ENCODE measurements at regions of chr5 and their contacts with region 1.

Region 1: DNA sequence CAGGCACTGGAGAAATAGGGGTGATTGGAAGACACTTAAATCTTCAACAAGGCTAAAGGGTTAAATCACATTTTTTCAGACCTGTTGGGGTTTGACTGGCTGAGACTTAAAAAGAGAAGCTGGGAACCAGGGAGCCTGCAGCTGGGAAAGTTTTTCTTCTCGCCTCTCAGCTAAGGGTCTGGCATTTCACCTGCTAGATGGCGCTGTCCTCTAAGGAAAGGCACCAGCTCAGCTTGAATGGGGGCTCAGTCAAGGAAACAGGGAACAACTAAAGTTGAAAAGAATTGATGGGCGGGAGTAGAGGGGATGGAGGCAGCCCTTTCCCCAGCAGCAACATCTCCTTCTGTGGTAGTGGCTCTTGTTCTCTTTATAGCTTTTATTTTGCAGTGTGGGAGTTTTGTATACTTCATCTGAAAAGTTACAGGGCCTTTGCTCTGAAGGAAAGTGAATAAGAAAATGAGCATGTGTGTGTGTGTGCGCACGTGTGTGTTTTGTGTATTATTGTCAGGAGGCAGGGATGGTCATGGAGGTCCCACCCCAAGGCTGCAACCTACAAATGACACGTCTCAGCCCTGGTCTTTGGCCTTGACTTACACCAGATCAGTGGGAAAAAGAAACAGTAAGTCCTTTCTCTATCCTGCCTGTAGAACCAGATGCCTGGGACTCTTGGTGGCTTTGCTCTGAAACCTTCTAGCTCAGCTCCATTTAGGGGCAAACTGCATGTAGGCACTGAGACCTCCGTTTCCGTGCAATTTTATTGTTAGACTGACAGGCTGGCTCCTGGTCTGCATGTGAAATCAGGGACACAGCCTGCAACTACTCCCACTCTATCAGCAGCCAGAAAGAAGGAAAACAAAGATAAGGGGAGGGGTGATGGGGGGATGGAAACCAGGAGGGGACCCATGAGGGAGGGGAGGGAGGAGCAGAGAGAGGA is 316.2 kb upstream of the CLINT1 start:
- H3K4me3 Mint-ChIP-seq: no peak overlapping the region
- H3K27ac Mint-ChIP-seq: no peak overlapping the region
- H3K4me1 Mint-ChIP-seq: peaks cover 8% of the 10 kb centered on the region
- H3K27me3 Mint-ChIP-seq: no peaks in the 10 kb centered on the region

Region 2: DNA sequence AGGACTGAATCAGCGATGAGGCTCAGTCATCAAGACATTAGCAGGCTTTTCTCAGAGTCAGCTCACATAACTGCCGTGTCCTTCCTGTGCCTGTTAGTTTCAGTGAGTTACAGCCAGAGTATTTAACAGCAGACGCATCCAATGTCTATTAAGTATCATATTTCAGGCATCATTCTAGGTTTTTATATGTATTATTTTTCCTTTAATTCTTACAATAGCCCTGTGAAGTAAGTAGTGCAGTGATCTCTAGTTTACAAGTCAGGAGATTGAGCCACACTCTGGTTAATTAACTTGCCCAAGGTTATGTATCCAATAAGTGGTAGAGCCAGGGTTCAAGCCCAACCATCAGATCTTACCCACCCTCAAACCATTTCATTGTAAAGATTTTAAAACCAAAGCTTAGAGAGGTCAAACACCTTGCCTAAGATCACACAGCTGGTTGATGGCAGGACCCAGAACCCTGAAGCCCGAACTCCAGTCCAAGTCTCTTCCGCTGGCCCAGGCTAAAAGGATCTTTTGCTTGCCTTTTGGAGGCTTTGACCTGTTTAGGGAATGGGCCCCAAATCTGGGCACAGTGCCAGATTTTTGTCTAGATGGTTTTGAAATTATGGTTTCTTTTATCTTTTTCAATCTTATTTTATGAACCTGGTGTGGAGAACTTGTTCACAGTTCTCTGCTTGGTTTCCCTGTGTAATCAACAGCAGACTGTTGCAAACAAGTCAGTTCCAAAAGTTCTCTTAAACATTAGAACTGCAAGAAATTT is 55.0 kb before region 1 on chr5:
- intact Hi-C with region 1: no loop called
- H3K4me3 Mint-ChIP-seq: no peak overlapping the region
- H3K27ac Mint-ChIP-seq: no peak overlapping the region
- H3K4me1 Mint-ChIP-seq: peaks cover 18% of the 10 kb centered on the region
- H3K27me3 Mint-ChIP-seq: no peaks in the 10 kb centered on the region

Region 3: GRCh38 chr5:158695595-158696330 is 520.6 kb after region 1 on chr5:
- intact Hi-C with region 1: loop called (anchors 1 kb)
- H3K4me3 Mint-ChIP-seq: no peak overlapping the region
- H3K27ac Mint-ChIP-seq: no peak overlapping the region
- H3K4me1 Mint-ChIP-seq: no peaks in the 10 kb centered on the region
- H3K27me3 Mint-ChIP-seq: peaks cover 13% of the 10 kb centered on the region

Region 4: DNA sequence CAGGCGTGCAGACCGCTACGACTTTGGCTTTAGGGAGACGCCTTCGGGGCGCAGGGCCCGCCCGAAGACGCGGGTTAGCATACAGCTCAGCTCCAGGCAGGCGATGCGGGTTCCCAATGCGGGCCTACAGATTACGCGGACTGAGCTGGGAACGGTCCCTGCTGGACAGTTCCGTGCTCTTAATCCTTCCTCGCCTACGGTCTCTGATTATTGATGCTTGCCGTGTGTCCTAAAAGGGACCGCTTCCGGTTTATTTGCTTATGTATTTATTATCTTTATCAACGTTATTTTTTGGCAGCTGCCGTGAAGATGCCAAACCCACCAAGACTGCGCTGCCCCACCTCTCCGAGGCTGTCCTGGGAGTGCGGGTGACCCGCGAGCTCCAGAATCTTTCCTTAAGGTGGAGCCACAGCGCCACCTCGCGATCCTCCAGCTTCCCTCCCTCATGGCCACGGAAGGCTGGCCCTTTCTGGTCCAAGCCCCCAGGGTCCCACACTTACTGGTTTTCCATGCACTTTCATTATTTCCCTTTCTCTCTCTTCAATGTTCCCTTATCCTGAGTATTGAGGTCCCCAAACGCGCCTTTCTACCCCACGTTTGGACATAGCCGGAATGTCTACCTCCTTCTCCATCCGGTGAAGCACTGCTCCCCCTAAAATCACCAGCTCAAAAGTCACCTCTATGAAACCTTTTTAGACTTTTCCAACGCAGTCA is 931.5 kb after region 1 on chr5:
- intact Hi-C with region 1: loop called (anchors 1 kb)
- H3K4me3 Mint-ChIP-seq: peak overlapping the region; percentile 71
- H3K27ac Mint-ChIP-seq: no peak overlapping the region
- H3K4me1 Mint-ChIP-seq: peaks cover 26% of the 10 kb centered on the region
- H3K27me3 Mint-ChIP-seq: peaks cover 76% of the 10 kb centered on the region